CD8-positive, alpha-beta T cell (primary cell): ENCODE measurements at regions of chr14 and their contacts with region 1.

Region 1: GRCh38 chr14:69620111-69620611 is 8.8 kb downstream of the SUSD6 start:
- DNase-seq: peak in 2 of 9 experiments; percentile 21 to 25
- ATAC-seq: no peak
- H3K4me3 ChIP-seq: no peak overlapping the region
- H3K4me3 Mint-ChIP-seq: peak overlapping the region; percentile 3
- H3K27ac ChIP-seq: no peak overlapping the region
- H3K27ac Mint-ChIP-seq: peak overlapping the region; percentile 66
- H3K4me1 ChIP-seq: peaks cover 84% of the 10 kb centered on the region
- H3K4me1 Mint-ChIP-seq: peaks cover 92% of the 10 kb centered on the region
- H3K27me3 ChIP-seq: no peaks in the 10 kb centered on the region
- H3K27me3 Mint-ChIP-seq: no peaks in the 10 kb centered on the region
- CTCF ChIP-seq: no peak

Region 2: DNA sequence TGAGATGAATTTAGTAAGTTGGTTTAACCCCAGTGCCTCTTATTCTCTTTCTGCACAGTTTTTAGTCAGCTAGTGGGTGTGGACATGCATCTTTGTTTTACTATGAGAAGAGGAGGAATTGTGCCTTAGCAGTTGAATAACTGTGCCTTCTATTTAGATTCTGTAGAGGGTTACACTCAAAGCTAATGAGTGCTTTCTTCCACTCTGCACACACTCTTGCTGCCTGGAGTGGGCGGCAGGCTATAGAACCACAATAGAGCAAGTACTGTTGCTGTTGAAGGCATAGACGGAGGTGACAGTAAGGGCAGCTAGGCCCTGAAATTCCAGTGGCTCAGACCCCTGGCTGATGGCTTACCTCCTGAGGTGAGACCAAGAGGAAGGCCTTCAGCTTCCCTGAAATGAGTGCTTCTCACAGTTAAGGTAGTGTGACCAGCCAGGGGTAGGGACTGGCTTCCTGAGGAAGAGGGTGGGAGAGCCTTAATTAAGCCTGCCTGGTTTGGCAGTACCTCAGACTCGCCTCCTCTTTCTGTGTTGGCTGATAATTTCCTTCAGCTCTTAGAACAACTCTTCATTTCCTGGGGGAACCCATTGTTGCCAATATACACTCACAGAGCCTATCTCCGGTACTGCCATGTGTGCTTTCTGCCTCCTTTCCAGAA is 15.9 kb after region 1 on chr14:
- CTCF ChIA-PET with region 1: no interaction called
- POLR2A ChIA-PET with region 1: interaction called, 4 read pairs
- intact Hi-C with region 1: loop called in 1 of 2 experiments (anchors 2 kb)
- DNase-seq: peak in 1 of 9 experiments; percentile 29
- ATAC-seq: peak; percentile 58
- H3K4me3 ChIP-seq: no peak overlapping the region
- H3K4me3 Mint-ChIP-seq: peak overlapping the region; percentile 44
- H3K27ac ChIP-seq: peak overlapping the region in 1 of 2 experiments; percentile 82
- H3K27ac Mint-ChIP-seq: peak overlapping the region; percentile 88
- H3K4me1 ChIP-seq: peaks cover 67% of the 10 kb centered on the region
- H3K4me1 Mint-ChIP-seq: peaks cover 81% of the 10 kb centered on the region
- H3K27me3 ChIP-seq: no peaks in the 10 kb centered on the region
- H3K27me3 Mint-ChIP-seq: no peaks in the 10 kb centered on the region
- CTCF ChIP-seq: no peak